ENCODE measurements at regions of chr20 and their contacts with region 1.

Region 1: GRCh38 chr20:815914-816606 is 17.5 kb upstream of the FAM110A start:
- DNase-seq: peak; percentile 43 to 51
- ATAC-seq: peak in 7 of 8 donors; percentile 25 to 66 (median 48)
- H3K4me3 ChIP-seq: no peak overlapping the region
- H3K27ac ChIP-seq: no peak overlapping the region
- H3K4me1 ChIP-seq: peaks cover 0 to 7% (median 0%) of the 10 kb centered on the region in 9 donors
- H3K27me3 ChIP-seq: peaks cover 0 to 40% (median 11%) of the 10 kb centered on the region in 7 donors
- CTCF ChIP-seq: peak; percentile 93 to 99 (median 97)

Region 2: DNA sequence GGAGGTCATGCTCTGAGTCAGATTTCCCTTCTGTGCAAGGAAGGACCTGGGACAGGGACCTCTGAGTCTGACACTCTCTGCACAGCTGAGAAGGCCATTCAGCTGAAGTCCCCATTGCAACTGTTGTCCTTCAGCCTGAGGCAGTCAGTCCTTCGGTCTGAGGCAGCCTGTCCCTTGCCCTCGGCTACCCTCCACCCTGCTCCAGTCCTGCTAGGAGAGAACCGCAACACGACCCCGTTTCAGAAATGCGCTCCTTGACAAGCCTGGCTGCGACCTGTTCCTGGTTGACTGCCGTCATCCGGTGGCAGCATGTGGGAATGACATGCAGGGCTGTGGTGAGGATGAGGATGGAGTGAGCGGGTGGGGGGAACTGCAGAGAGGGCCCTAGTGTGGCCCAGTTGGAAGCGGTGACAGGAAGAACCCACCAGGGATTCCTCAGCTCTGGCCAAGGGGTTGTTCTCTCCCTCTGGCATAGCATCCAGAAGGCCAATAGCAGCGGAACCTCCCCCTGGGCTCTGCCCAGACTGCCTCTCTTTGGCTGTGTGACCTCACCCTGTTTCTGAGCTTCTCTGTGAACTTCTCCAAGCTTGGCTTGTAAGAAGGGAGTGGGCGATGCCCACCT is 140.4 kb after region 1 on chr20:
- intact Hi-C with region 1: loop called (anchors 1 to 2 kb)
- DNase-seq: peak; percentile 54 to 69
- ATAC-seq: peak; percentile 57 to 86 (median 80)
- H3K4me3 ChIP-seq: no peak overlapping the region
- H3K27ac ChIP-seq: no peak overlapping the region
- H3K4me1 ChIP-seq: peaks cover 0 to 4% (median 0%) of the 10 kb centered on the region in 9 donors
- H3K27me3 ChIP-seq: peaks cover 0 to 75% (median 66%) of the 10 kb centered on the region in 7 donors
- CTCF ChIP-seq: peak; percentile 90 to 99 (median 98)

Region 3: DNA sequence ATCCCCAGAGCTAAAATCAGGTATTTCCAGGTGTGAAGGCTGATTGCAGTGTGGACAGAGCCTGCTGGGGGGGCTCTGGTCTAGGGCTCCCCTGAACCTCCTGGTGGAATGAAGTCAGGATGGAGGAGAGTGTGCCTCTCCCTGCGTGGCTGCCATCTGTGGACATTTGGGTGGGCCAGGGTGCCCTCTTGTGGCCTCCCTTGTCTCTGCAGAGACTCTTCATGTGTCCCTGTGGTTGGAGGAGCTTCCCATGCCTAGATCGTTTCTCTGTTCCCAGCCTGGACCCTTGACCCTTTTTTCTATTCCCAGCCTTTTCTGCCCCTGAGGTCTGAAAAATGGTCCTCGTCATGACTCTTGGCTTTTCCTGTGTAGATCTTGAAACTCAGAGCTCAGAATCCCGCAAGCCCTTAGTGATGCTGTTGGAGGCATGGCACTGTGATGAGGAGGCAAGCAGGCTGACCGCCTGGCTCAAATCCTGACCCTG is 292.4 kb after region 1 on chr20:
- intact Hi-C with region 1: loop called in 6 of 10 experiments (anchors 2 to 10 kb)
- DNase-seq: peak; percentile 43 to 45
- ATAC-seq: peak in 7 of 8 donors; percentile 34 to 81 (median 70)
- H3K4me3 ChIP-seq: no peak overlapping the region
- H3K27ac ChIP-seq: no peak overlapping the region
- H3K4me1 ChIP-seq: no peaks in the 10 kb centered on the region
- H3K27me3 ChIP-seq: no peaks in the 10 kb centered on the region
- CTCF ChIP-seq: peak; percentile 51 to 84 (median 75)

Region 4: GRCh38 chr20:1185790-1186334 is 369.8 kb after region 1 on chr20:
- intact Hi-C with region 1: loop called in 2 of 10 experiments (anchors 10 kb)
- DNase-seq: peak; percentile 48 to 59
- ATAC-seq: peak; percentile 51 to 78 (median 66)
- H3K4me3 ChIP-seq: peak overlapping the region; percentile 28 to 62 (median 58)
- H3K27ac ChIP-seq: peak overlapping the region in 6 of 10 donors; percentile 55 to 69 (median 60)
- H3K4me1 ChIP-seq: peaks cover 0 to 29% (median 16%) of the 10 kb centered on the region in 9 donors
- H3K27me3 ChIP-seq: peaks cover 4 to 37% (median 27%) of the 10 kb centered on the region in 7 donors
- CTCF ChIP-seq: peak; percentile 17 to 64 (median 52)

Region 5: GRCh38 chr20:1204113-1204512 is 388.1 kb after region 1 on chr20:
- intact Hi-C with region 1: loop called in 1 of 10 experiments (anchors 10 kb)
- DNase-seq: no peak
- ATAC-seq: peak in 7 of 8 donors; percentile 13 to 38 (median 27)
- H3K4me3 ChIP-seq: no peak overlapping the region
- H3K27ac ChIP-seq: peak overlapping the region in 7 of 10 donors; percentile 16 to 71 (median 39)
- H3K4me1 ChIP-seq: peaks cover 0 to 34% (median 0%) of the 10 kb centered on the region in 9 donors
- H3K27me3 ChIP-seq: peaks cover 0 to 2% (median 0%) of the 10 kb centered on the region in 7 donors
- CTCF ChIP-seq: no peak